HCT116 (cell line): ENCODE measurements at regions of chr4 and their contacts with region 1.

Region 1: GRCh38 chr4:99054428-99054994 is 34.1 kb downstream of the ADH5 start:
- DNase-seq: no peak
- ATAC-seq: no peak
- H3K4me3 ChIP-seq: no peak overlapping the region
- H3K27ac ChIP-seq: no peak overlapping the region
- H3K4me1 ChIP-seq: peaks cover 13 to 24% of the 10 kb centered on the region in 2 experiments
- H3K27me3 ChIP-seq: no peaks in the 10 kb centered on the region
- CTCF ChIP-seq: no peak
- POLR2A ChIP-seq: no peak
- RAD21 ChIP-seq: no peak

Region 2: GRCh38 chr4:98939892-98940298 is 114.6 kb before region 1 on chr4:
- CTCF ChIA-PET with region 1: interaction called, 4 read pairs
- POLR2A ChIA-PET with region 1: no interaction called
- RAD21 ChIA-PET with region 1: no interaction called
- intact Hi-C with region 1: loop called (anchors 5 kb)
- DNase-seq: peak; percentile 75
- ATAC-seq: peak; percentile 84
- H3K4me3 ChIP-seq: no peak overlapping the region
- H3K27ac ChIP-seq: no peak overlapping the region
- H3K4me1 ChIP-seq: peaks cover 2 to 36% of the 10 kb centered on the region in 2 experiments; a peak in 3 of 4 replicates
- H3K27me3 ChIP-seq: no peaks in the 10 kb centered on the region
- CTCF ChIP-seq: peak; percentile 55 to 87 (median 74); a peak in 5 of 6 replicates
- POLR2A ChIP-seq: no peak
- RAD21 ChIP-seq: peak; percentile 65

Region 3: GRCh38 chr4:98995183-98996055 is 59.1 kb before region 1 on chr4 and contains the start of gene METAP1:
- CTCF ChIA-PET with region 1: interaction called, 25 read pairs
- POLR2A ChIA-PET with region 1: no interaction called
- RAD21 ChIA-PET with region 1: interaction called, 6 to 7 read pairs
- intact Hi-C with region 1: loop called (anchors 5 kb)
- DNase-seq: peak; percentile 94
- ATAC-seq: peak; percentile 90
- H3K4me3 ChIP-seq: peak within 1 kb of the TSS; percentile 72 to 73
- H3K27ac ChIP-seq: peak within 1 kb of the TSS; percentile 87
- H3K4me1 ChIP-seq: peaks cover 12 to 26% of the 10 kb centered on the region in 2 experiments
- H3K27me3 ChIP-seq: no peaks in the 10 kb centered on the region
- CTCF ChIP-seq: peak in 2 of 3 experiments; percentile 45 to 52; a peak in 5 of 6 replicates
- POLR2A ChIP-seq: peak; percentile 63
- RAD21 ChIP-seq: peak; percentile 92
- total RNA-seq, gene METAP1: 112 TPM

Region 4: GRCh38 chr4:99067617-99068016 is 13.1 kb after region 1 on chr4:
- CTCF ChIA-PET with region 1: interaction called, 11 read pairs
- POLR2A ChIA-PET with region 1: no interaction called
- RAD21 ChIA-PET with region 1: no interaction called
- intact Hi-C with region 1: no loop called
- DNase-seq: no peak
- ATAC-seq: no peak
- H3K4me3 ChIP-seq: no peak overlapping the region
- H3K27ac ChIP-seq: no peak overlapping the region
- H3K4me1 ChIP-seq: no peaks in the 10 kb centered on the region
- H3K27me3 ChIP-seq: no peaks in the 10 kb centered on the region
- CTCF ChIP-seq: no peak
- POLR2A ChIP-seq: no peak
- RAD21 ChIP-seq: no peak